Activated CD4-positive, alpha-beta T cell treated with anti-CD3 and anti-CD28 coated beads for 36 hours (primary cell): ENCODE measurements at regions of chr20 and their contacts with region 1.

Region 1: GRCh38 chr20:55406872-55407271 is 598.4 kb downstream of the CBLN4 start:
- DNase-seq: no peak
- ATAC-seq: no peak
- H3K4me3 Mint-ChIP-seq: no peak overlapping the region
- H3K27ac Mint-ChIP-seq: no peak overlapping the region
- H3K4me1 Mint-ChIP-seq: no peaks in the 10 kb centered on the region
- H3K27me3 Mint-ChIP-seq: no peaks in the 10 kb centered on the region

Region 2: DNA sequence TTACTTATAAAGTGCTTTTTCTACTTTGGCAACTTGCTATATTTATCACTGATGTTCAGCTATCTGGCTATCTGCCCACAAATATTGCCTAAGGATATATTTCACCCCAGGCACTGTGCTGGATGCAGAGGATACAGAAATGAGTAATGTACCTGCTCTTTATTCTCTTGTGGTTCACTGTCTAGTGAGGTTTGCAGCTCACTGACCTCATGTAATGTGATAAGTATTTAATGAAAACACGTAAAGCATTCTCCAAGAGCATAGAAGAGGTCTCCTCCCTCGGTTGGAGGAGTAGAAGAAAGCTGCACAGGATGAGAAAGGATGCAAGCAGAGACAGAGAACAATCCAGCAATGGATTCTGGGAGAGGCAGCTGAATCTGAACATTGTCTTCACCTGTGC is 12.3 kb before region 1 on chr20:
- CTCF ChIA-PET with region 1: no interaction called
- POLR2A ChIA-PET with region 1: no interaction called
- intact Hi-C with region 1: loop called in 1 of 2 experiments (anchors 2 kb)
- DNase-seq: no peak
- ATAC-seq: no peak
- H3K4me3 Mint-ChIP-seq: no peak overlapping the region
- H3K27ac Mint-ChIP-seq: no peak overlapping the region
- H3K4me1 Mint-ChIP-seq: no peaks in the 10 kb centered on the region
- H3K27me3 Mint-ChIP-seq: no peaks in the 10 kb centered on the region

Region 3: DNA sequence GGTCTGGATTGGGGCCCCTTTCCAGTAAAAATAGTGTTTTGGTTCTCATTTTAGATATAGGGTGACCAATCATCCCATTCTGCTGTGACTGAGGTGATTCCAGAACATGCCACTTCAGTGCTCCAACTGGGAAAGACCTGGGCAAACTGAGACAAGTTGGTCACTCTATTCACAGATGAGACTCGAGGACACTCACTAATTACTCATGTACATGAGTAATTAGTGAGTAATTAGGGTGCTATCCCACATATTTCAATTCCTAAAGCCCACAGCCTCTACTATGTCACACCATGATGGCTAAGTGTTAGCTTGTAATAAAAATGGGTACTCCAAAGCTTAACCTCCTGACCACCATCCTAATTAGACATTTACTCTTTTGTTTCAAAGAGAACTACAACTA is 512.4 kb after region 1 on chr20:
- CTCF ChIA-PET with region 1: no interaction called
- POLR2A ChIA-PET with region 1: no interaction called
- intact Hi-C with region 1: no loop called
- DNase-seq: no peak
- ATAC-seq: no peak
- H3K4me3 Mint-ChIP-seq: no peak overlapping the region
- H3K27ac Mint-ChIP-seq: no peak overlapping the region
- H3K4me1 Mint-ChIP-seq: no peaks in the 10 kb centered on the region
- H3K27me3 Mint-ChIP-seq: no peaks in the 10 kb centered on the region